ENCODE measurements at regions of chr12 and their contacts with region 1.

Region 1: DNA sequence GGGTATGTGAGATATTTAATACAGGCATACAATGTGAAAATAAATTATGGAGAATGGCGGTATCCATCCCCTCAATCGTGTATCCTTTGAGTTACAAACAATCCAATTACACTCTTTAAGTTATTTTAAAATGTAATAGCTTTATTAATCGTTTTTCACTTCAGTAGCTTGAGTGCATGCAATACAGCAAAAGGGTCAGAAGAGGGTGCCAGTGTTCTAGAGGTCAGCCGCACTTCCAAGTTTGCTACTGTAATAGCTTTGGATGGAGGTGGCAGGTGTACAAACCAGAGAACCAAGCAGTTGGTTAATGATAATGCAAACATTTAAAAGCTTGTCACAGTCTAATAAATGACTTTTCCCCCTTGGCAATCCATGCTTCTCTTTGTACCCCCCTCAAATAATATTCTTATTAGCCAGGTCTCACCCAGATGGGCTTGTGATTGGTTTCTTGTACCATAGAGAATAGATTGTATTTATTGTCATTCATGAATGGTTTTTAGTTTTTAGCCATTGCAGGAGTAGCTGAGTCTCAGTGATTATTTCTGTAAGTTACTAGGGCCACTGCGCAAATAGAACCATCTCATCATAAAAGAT is 127.0 kb downstream of the ERC1 start:
- DNase-seq: peak; percentile 52
- H3K4me3 Mint-ChIP-seq: no peak overlapping the region
- H3K27ac Mint-ChIP-seq: no peak overlapping the region
- H3K4me1 Mint-ChIP-seq: peaks cover 6% of the 10 kb centered on the region
- H3K27me3 Mint-ChIP-seq: no peaks in the 10 kb centered on the region

Region 2: GRCh38 chr12:1013618-1014489 is 104.2 kb before region 1 on chr12:
- intact Hi-C with region 1: no loop called
- DNase-seq: no peak
- H3K4me3 Mint-ChIP-seq: no peak overlapping the region
- H3K27ac Mint-ChIP-seq: no peak overlapping the region
- H3K4me1 Mint-ChIP-seq: no peaks in the 10 kb centered on the region
- H3K27me3 Mint-ChIP-seq: no peaks in the 10 kb centered on the region

Region 3: GRCh38 chr12:1204581-1205121 is 86.6 kb after region 1 on chr12:
- intact Hi-C with region 1: loop called (anchors 5 kb)
- DNase-seq: peak; percentile 2
- H3K4me3 Mint-ChIP-seq: no peak overlapping the region
- H3K27ac Mint-ChIP-seq: no peak overlapping the region
- H3K4me1 Mint-ChIP-seq: peaks cover 7% of the 10 kb centered on the region
- H3K27me3 Mint-ChIP-seq: no peaks in the 10 kb centered on the region

Region 4: DNA sequence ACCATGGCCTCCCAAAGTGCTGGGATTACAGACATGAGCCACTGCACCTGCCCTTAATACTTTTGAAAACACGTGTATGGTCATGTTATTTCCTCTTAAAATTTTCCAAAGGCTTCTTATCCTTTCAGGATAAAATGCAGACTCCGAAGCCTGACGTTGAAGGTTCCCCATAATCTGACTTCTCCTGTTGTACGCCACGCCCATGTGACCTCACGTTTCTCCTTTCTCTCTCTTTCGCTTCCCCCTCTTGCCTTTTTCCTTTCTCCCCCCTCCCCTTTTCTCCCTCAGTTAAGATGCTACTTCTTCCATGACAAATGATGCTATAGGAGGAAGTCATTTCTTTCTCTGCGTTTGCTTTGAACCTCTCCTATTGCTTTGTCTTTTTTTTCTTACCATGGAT is 210.3 kb after region 1 on chr12:
- intact Hi-C with region 1: loop called (anchors 5 kb)
- DNase-seq: no peak
- H3K4me3 Mint-ChIP-seq: no peak overlapping the region
- H3K27ac Mint-ChIP-seq: no peak overlapping the region
- H3K4me1 Mint-ChIP-seq: peaks cover 10% of the 10 kb centered on the region
- H3K27me3 Mint-ChIP-seq: peaks cover 4% of the 10 kb centered on the region

Region 5: DNA sequence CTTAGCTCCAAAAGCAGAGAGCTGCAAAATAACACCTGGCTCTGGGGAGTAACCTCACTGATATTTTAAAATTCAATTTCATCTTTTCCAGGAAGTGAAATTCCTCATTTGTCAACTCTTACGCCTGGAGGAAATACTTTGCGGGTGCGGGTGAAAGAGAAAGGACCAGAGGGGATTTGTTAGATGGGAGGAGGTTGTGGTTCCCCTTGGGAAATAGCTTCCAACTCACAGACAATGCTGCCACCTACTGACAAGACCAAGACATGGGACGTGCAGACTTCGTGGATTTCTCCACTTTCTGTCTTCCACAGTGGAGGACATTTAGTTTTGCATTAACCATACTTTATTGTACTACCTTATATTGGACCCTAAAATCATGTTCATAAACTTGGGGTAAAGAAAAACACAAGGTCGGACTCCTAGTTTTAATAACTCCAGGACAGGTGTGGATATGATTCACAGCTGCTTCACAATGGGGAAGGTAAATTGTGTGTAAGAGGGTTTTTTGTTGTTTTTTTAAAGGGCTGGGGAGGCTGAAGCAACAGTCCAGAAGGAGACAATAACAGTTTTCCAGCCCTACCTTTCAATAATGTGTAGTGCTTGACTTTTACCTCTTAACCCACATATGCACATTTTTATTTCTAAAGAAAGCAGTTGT is 465.5 kb after region 1 on chr12:
- intact Hi-C with region 1: loop called (anchors 1 kb)
- DNase-seq: peak; percentile 58
- H3K4me3 Mint-ChIP-seq: no peak overlapping the region
- H3K27ac Mint-ChIP-seq: no peak overlapping the region
- H3K4me1 Mint-ChIP-seq: peaks cover 23% of the 10 kb centered on the region
- H3K27me3 Mint-ChIP-seq: peaks cover 5% of the 10 kb centered on the region

Region 6: DNA sequence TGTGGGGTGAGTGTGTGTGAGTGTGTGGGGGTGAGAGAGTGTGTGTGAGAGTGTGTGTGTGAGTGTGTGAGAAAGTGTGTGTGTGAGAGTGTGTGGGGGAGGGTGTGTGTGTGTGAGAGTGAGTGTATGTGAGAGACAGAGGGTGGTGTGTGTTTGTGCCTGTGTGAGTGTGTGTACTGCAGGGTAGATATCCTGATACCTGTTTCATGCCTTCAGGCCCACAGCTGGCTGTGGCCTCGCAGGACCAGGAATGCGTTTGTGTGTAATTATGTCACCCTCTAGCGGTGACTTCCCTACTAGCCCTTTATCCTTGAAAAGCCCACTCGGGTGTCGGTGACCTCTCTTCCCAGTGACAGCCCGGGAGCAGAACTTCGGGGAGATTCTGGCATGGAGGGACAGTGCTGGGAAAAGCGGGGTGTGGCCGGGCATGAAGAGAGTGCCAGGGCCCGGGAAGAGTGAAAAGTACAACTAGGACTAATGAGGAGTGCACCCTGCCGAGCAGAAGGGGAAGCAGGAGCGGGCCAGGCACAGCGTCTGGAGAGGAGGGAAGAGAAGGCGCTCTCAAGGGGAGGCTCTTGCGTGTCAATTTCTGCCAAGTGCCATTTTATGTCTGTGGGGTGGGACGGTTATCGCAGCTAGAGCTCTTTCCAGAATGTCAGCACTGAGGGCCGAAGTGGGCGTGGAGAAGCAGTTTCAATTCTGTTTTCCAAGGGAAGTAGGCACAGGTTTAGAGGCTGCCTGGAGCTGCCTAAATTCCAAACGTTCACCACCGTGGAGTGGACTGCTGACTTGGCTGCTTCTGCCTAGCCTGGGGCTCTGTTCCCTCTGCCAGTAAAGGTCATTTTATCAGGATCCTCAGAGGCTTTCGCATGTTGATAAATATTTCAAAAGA is 487.3 kb after region 1 on chr12:
- intact Hi-C with region 1: loop called (anchors 1 kb)
- DNase-seq: peak; percentile 48
- H3K4me3 Mint-ChIP-seq: peak overlapping the region; percentile 71
- H3K27ac Mint-ChIP-seq: peak overlapping the region; percentile 2
- H3K4me1 Mint-ChIP-seq: peaks cover 52% of the 10 kb centered on the region
- H3K27me3 Mint-ChIP-seq: no peaks in the 10 kb centered on the region

Measured in activated T-helper 1 cell treated with anti-CD3 and anti-CD28 coated beads, Interleukin-12 subunit alpha, Interleukin-12 subunit beta, Interleukin-2, Interleukin-4 antibody, amounts not matched to agents 30 ng/mL and 10 ng/mL and 1 ng/mL, durations not matched to agents 14 hours and 24 hours and 36 hours (primary cell).